Gastrocnemius medialis (tissue), 4 donors: ENCODE measurements at regions of chr20 and their contacts with region 1.

Region 1: GRCh38 chr20:22180244-22180643 is 404.1 kb downstream of the FOXA2 start:
- DNase-seq: no peak
- ATAC-seq: no peak
- H3K4me3 ChIP-seq: no peak overlapping the region
- H3K27ac ChIP-seq: no peak overlapping the region
- H3K4me1 ChIP-seq: no peaks in the 10 kb centered on the region
- H3K27me3 ChIP-seq: no peaks in the 10 kb centered on the region
- CTCF ChIP-seq: peak in 1 of 5 experiments; percentile 6
- POLR2A ChIP-seq: no peak

Region 2: DNA sequence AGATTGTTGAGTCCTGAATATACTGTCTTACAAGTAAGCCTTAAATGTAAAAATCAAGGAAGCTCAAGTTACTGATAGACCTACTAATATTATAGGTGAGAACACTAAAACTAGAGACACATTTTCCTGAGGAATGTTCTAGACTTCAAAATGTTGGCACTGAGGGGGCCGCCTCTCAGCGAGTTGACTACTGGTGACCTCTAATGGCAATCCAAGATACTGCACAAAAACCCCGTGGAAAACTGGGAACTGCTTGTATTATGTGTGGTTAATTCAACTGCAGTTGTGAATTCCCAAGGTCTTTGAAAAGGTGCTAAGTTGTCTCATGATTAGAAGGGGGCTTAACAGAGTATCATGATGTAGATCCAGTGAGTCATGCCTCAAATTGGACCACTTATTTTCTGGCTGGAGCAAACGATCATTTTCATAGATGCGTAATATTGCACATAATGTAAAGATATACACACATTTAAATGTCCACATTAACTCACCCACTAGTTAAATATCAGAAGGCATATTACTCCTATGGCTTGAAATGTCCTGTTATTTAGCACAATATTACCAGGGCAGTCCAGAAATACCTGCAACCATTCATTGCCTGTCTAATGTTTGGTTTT is 67.9 kb after region 1 on chr20:
- in situ Hi-C with region 1: loop called in 1 of 4 experiments (anchors 10 kb)
- intact Hi-C with region 1: no loop called
- DNase-seq: no peak
- ATAC-seq: no peak
- H3K4me3 ChIP-seq: no peak overlapping the region
- H3K27ac ChIP-seq: no peak overlapping the region
- H3K4me1 ChIP-seq: no peaks in the 10 kb centered on the region
- H3K27me3 ChIP-seq: no peaks in the 10 kb centered on the region
- CTCF ChIP-seq: peak in 1 of 5 experiments; percentile 37
- POLR2A ChIP-seq: no peak

Region 3: DNA sequence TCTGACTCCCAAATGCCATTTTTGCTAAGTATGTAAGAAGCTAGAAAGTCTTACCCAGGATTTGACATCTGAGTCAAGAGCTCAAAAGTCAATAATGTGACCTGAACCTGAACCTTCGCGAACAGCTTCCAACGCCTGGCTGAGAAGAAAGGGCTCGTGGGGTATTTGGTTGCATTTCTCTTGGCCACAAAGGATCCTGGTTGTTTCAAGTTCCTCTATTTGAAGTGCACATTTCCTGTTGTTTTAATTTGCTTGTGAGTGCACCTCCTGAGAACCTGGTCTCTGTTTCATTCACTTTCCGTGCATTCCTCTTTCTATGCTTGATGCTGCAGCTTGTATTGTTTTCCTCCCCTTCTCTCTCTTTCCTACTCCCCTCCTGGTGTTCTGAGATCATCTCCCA is 191.6 kb after region 1 on chr20:
- in situ Hi-C with region 1: no loop called
- intact Hi-C with region 1: no loop called
- DNase-seq: no peak
- ATAC-seq: peak; percentile 38 to 55
- H3K4me3 ChIP-seq: no peak overlapping the region
- H3K27ac ChIP-seq: peak overlapping the region in 1 of 4 donors; percentile 45
- H3K4me1 ChIP-seq: peaks cover 36 to 55% of the 10 kb centered on the region in 2 donors
- H3K27me3 ChIP-seq: no peaks in the 10 kb centered on the region
- CTCF ChIP-seq: no peak
- POLR2A ChIP-seq: no peak